ENCODE measurements at regions of chr2 and their contacts with region 1.

Region 1: DNA sequence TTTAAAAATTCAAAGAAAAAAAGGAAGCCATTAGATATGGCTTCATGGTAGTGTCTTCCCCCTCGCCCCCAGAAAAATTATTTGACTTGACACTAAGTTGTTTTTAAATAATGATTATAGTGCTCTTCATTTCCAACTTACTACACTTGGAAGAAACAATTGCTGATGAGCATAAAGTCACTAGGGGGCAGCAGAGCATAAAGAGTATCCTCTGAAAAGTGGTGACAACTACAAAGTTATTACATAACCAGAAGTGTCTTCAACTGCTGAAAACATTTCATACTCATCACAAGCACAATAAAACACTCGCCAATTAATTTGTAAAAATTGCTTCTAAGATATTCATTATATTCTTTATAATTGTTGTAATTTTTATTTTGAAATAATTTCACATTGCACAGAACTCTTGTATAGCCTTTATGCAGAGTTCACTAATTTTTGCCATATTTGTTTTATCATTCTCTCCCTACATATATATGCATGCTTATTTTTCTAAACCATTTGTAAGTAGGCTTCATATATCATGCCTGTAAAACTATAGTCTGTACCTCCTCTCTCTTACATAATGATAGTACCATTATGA is 54.9 kb downstream of the EXOC6B start:
- DNase-seq: peak in 1 of 2 donors; percentile 64
- H3K4me3 ChIP-seq: no peak overlapping the region
- H3K27ac ChIP-seq: no peak overlapping the region
- H3K4me1 ChIP-seq: no peaks in the 10 kb centered on the region
- H3K27me3 ChIP-seq: no peaks in the 10 kb centered on the region
- CTCF ChIP-seq: peak; percentile 87 to 90

Region 2: DNA sequence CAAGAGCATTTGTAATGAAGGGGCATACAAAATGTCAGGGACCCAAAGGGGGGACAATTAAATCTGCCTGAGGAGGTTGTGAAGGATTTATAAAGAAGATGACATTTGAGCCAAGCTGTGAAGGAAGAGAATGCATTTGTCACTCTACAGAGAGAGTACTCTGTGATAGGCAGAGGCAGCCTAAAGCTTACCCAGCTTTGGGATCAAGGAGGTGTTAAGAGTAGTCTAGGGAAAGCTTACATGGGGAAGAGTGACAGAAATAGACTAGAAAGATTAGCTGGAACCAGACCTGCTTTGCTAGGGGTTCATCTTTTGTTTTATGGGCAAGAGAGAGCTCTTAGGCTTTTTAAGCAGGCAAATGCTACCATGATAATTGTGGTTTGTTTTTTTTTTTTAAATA is 454.2 kb before region 1 on chr2:
- intact Hi-C with region 1: no loop called
- DNase-seq: no peak
- H3K4me3 ChIP-seq: no peak overlapping the region
- H3K27ac ChIP-seq: no peak overlapping the region
- H3K4me1 ChIP-seq: no peaks in the 10 kb centered on the region
- H3K27me3 ChIP-seq: no peaks in the 10 kb centered on the region
- CTCF ChIP-seq: no peak

Region 3: GRCh38 chr2:72862239-72862988 is 91.4 kb after region 1 on chr2:
- intact Hi-C with region 1: loop called (anchors 2 kb)
- DNase-seq: peak; percentile 85 to 90
- H3K4me3 ChIP-seq: peak overlapping the region in 1 of 2 donors; percentile 26
- H3K27ac ChIP-seq: no peak overlapping the region
- H3K4me1 ChIP-seq: peaks cover 0 to 10% (median 9%) of the 10 kb centered on the region in 4 donors
- H3K27me3 ChIP-seq: peaks cover 0 to 23% of the 10 kb centered on the region in 2 donors
- CTCF ChIP-seq: peak; percentile 93 to 98

Region 4: GRCh38 chr2:72999729-73000725 is 229.1 kb after region 1 on chr2:
- intact Hi-C with region 1: no loop called
- DNase-seq: peak in 1 of 2 donors; percentile 52
- H3K4me3 ChIP-seq: no peak overlapping the region
- H3K27ac ChIP-seq: no peak overlapping the region
- H3K4me1 ChIP-seq: peaks cover 0 to under 1% (median 0%) of the 10 kb centered on the region in 4 donors
- H3K27me3 ChIP-seq: no peaks in the 10 kb centered on the region
- CTCF ChIP-seq: no peak

Measured in tibial artery (tissue), 4 donors.